Activated CD4-positive, alpha-beta T cell treated with anti-CD3 and anti-CD28 coated beads, Interleukin-2, amount 10 ng/mL, durations not matched to agents 24 days and 14 days (primary cell): ENCODE measurements at regions of chr6 and their contacts with region 1.

Region 1: GRCh38 chr6:56843573-56844349 is 111.1 kb upstream of the BEND6 start:
- DNase-seq: peak; percentile 88
- H3K4me3 Mint-ChIP-seq: peak overlapping the region; percentile 81
- H3K27ac Mint-ChIP-seq: peak overlapping the region; percentile 17
- H3K4me1 Mint-ChIP-seq: peaks cover 6% of the 10 kb centered on the region
- H3K27me3 Mint-ChIP-seq: peaks cover 47% of the 10 kb centered on the region

Region 2: GRCh38 chr6:56359201-56359899 is 484.4 kb before region 1 on chr6:
- intact Hi-C with region 1: no loop called
- DNase-seq: peak; percentile 86
- H3K4me3 Mint-ChIP-seq: no peak overlapping the region
- H3K27ac Mint-ChIP-seq: no peak overlapping the region
- H3K4me1 Mint-ChIP-seq: no peaks in the 10 kb centered on the region
- H3K27me3 Mint-ChIP-seq: peaks cover 1% of the 10 kb centered on the region

Region 3: DNA sequence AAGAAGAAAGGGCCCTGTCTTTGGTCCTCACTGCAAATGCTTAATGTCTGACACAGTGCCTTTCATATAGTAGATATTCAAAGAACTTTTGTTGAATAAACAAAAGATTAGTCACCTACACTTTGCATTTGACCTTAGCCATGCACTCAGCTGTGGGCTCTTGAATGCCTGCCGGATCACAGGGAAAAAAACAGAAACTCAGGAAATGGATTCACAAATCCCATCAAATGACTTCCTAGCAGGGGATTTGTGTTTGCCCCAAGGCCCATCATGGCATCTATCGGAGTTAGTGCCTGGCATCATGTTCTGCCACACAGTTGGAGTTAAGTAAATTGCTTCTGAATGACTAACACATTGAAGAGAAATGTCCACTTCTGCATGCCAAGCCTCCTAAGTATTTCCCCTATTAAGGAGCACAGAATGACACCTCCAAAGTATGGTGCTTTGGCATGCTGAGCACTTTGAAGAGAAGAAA is 128.7 kb before region 1 on chr6:
- intact Hi-C with region 1: loop called (anchors 5 kb)
- DNase-seq: no peak
- H3K4me3 Mint-ChIP-seq: no peak overlapping the region
- H3K27ac Mint-ChIP-seq: no peak overlapping the region
- H3K4me1 Mint-ChIP-seq: no peaks in the 10 kb centered on the region
- H3K27me3 Mint-ChIP-seq: peaks cover 5% of the 10 kb centered on the region